ENCODE measurements at regions of chr12 and their contacts with region 1.

Region 1: GRCh38 chr12:8697476-8698131 is at the start of gene RIMKLB:
- DNase-seq: peak; percentile 78
- H3K4me3 ChIP-seq: peak within 1 kb of the TSS; percentile 97 to 98 (median 97)
- H3K27ac ChIP-seq: peak within 1 kb of the TSS; percentile 85
- H3K4me1 ChIP-seq: peaks cover 14% of the 10 kb centered on the region
- H3K27me3 ChIP-seq: no peaks in the 10 kb centered on the region
- CTCF ChIP-seq: no peak
- total RNA-seq, gene RIMKLB: 27.2 to 30.2 TPM

Region 2: DNA sequence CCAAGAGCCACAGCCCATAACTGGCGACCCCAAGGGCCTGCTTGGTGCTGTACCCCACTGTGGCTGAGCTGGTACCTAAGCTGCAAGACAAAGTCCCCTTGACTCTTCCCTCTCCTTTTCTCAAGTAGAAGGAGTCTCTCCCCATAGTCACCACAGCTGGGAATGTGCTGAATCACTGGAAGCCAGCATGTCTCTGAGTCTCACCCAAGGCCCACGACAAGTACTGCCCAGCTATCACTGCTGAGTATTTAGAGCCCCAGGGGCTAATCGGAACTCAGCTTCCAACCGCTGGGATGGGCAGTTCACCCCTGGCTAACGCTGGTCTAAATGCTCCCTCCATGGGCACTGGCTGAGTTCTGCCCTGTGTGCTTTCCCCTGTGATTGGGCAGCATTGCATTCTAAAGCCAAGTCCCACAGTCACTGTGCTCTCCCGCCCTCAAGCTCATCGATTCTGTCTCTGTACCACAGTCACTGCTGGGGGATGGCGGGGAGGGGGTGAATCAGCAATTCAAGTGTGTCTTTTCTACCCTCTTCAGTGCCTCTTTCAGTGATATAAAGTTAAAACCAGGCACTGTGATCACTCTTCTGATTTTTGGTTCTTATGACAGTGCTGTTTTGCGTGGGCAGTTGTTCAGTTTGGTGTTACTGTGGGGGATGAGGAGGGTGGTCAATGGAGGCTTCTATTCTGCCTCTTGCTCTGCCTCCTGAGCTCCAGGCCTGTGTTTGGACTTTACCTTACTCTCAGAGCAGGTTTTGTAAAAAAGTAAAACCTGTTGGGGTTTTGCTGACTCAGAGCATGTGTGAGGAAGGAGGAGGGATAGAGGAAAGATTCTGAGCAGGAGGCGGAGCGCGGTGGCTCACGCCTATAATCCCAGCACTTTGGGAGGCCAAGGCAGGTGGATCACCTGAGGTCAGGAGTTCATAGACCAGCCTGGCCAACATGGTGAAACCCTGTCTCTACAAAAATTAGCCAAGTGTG is 131.2 kb after region 1 on chr12:
- CTCF ChIA-PET with region 1: no interaction called
- dilution Hi-C with region 1: no loop called
- in situ Hi-C with region 1: no loop called
- intact Hi-C with region 1: loop called (anchors 5 kb)
- DNase-seq: peak; percentile 58
- H3K4me3 ChIP-seq: no peak overlapping the region
- H3K27ac ChIP-seq: peak overlapping the region; percentile 72
- H3K4me1 ChIP-seq: peaks cover 28% of the 10 kb centered on the region
- H3K27me3 ChIP-seq: no peaks in the 10 kb centered on the region
- CTCF ChIP-seq: no peak

Measured in mammary epithelial cell (primary cell).